Activated naive CD4-positive, alpha-beta T cell treated with anti-CD3 and anti-CD28 coated beads, Interleukin-2, amount 10 ng/mL, durations not matched to agents 7 days and 5 days (primary cell): ENCODE measurements at regions of chr1 and their contacts with region 1.

Region 1: DNA sequence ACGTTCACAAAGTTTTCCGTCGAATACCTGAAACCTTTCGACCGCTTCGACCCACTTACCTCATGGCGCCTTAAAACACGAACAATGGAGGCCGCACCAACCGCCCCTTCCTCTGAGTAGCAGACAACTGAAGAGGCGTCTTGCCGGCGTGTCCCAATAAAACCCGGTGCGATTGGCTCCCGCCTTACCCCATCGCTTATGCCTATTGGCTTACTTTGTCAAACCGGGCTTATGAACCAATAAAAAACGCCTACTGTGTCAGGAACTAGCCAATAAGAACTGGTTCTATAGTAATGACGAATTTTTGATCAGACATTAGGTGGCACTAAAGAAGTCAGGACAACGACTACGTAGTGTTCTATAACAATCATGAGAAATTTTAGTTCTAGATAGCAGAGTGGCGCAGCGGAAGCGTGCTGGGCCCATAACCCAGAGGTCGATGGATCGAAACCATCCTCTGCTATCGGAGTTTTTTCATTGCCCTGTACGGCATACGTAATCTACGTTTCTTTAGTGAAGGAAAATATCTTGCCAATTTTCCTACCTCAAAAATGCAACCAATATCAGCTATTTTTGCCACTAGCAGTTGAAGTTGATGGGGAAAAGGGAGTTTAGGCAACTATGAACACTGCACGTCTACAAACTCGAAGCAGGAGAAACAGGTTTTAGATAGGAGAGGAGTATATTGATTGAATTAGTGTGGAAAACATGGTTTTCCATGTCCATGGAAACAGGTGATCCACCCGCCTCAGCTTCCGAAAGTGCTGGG is at the start of gene ILF2:
- DNase-seq: peak; percentile 99
- H3K4me3 Mint-ChIP-seq: no peak within 1 kb of the TSS
- H3K27ac Mint-ChIP-seq: no peak within 1 kb of the TSS
- H3K4me1 Mint-ChIP-seq: peaks cover 37% of the 10 kb centered on the region
- H3K27me3 Mint-ChIP-seq: no peaks in the 10 kb centered on the region

Region 2: DNA sequence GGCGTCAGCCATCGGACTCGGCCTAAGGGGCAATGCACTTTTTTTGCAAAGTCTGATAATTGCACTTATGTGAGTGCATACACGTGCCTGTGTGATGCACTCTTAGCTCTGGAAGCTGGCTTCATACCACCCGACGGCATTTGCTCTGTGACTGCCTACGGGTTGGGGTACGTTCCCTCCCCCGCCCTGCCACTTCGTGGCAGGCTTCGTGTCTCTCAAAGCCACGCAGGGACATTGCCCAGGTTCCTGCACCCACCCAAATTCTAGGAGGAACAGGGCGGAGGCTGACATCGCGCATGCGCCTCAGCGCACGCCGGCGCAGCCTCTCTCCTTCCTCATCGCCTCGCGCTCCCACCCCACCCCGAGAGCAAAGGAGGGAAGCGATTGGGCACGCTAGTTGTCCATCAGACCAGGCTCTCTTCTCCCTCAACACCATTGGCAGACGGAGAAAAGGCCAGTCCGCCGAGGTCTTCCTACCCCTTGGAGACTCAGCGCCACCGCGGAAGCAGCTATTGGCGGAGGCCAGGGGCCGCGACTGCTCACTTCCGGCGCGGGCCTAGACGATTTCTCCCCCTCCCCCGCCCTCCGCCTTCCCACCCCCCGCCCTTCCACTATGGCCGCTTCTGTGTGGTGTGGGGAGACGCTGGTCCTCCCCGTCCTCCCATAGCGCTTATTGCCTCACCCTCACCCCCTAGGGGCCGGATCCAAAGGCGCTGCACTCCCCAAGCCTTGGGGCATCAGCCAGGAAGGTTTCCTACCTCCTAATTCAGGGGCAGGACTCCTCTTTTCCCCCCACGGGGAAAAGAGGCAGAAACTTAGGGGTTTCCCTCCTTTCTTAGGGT is 56.6 kb after region 1 on chr1 and contains the start of gene INTS3:
- CTCF ChIA-PET with region 1: interaction called, 10 read pairs
- DNase-seq: peak; percentile 100
- H3K4me3 Mint-ChIP-seq: peak within 1 kb of the TSS; percentile 84
- H3K27ac Mint-ChIP-seq: peak within 1 kb of the TSS; percentile 93
- H3K4me1 Mint-ChIP-seq: peaks cover 37% of the 10 kb centered on the region
- H3K27me3 Mint-ChIP-seq: peaks cover 4% of the 10 kb centered on the region

Region 3: GRCh38 chr1:153967082-153968000 is 296.3 kb after region 1 on chr1 and contains the start of gene CREB3L4:
- CTCF ChIA-PET with region 1: no interaction called
- DNase-seq: peak; percentile 92
- H3K4me3 Mint-ChIP-seq: peak within 1 kb of the TSS; percentile 89
- H3K27ac Mint-ChIP-seq: peak within 1 kb of the TSS; percentile 94
- H3K4me1 Mint-ChIP-seq: peaks cover 68% of the 10 kb centered on the region
- H3K27me3 Mint-ChIP-seq: no peaks in the 10 kb centered on the region